Activated B cell treated with CpG ODN at 0.5 μM for 24 hours (primary cell): ENCODE measurements at regions of chr16 and their contacts with region 1.

Region 1: DNA sequence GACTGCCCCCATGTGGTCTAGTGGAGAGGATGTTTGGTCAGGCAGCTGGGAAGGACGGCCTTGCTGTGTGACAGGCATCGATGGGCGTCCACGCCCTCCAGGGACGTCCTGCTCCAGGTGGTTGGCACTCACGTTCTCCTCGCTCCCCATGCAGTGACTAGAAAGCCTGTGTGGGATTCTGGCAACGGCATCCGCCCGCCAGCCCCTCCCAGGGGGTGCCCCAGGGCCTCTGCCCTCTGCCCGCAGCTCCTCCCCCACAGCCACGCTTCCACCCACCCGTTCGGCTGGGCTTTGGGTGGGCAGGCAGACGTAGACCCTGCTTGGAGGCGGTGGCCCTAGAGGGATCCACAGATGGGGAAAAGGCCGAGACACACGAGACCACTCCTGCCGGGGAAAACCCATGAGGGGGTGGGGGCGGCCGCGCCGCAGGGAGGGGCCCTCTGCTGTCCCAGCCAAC is 4.7 kb upstream of the IL17C start:
- DNase-seq: peak; percentile 64
- ATAC-seq: peak; percentile 54
- H3K4me3 Mint-ChIP-seq: peak overlapping the region; percentile 76
- H3K27ac Mint-ChIP-seq: peak overlapping the region; percentile 71
- H3K4me1 Mint-ChIP-seq: peaks cover 46% of the 10 kb centered on the region
- H3K27me3 Mint-ChIP-seq: no peaks in the 10 kb centered on the region
- CTCF ChIP-seq: no peak

Region 2: DNA sequence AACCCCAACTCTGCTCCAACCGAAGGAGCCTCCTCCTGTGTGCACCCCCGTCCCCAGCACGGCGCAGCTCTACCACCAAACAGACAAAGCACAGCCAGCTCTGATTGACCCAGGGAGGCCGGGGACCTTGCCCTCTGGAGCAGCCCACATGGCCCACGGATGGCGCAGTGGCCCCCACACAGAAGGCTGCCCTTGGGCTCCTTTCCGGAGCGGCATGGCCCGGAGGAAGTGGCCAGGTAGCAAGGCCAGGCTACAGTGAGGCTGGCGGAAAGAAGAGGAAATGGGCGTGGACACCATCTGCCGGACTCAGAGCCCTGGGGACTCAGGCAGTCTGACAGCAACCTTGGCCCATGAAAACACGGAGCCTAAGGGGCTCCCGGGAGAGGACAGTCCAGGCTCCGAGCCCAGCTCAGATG is 83.5 kb before region 1 on chr16:
- CTCF ChIA-PET with region 1: no interaction called
- POLR2A ChIA-PET with region 1: interaction called, 10 read pairs
- intact Hi-C with region 1: no loop called
- DNase-seq: no peak
- ATAC-seq: no peak
- H3K4me3 Mint-ChIP-seq: no peak overlapping the region
- H3K27ac Mint-ChIP-seq: no peak overlapping the region
- H3K4me1 Mint-ChIP-seq: peaks cover 10% of the 10 kb centered on the region
- H3K27me3 Mint-ChIP-seq: peaks cover 7% of the 10 kb centered on the region
- CTCF ChIP-seq: no peak

Region 3: GRCh38 chr16:88662843-88663606 is 29.3 kb after region 1 on chr16 and contains the start of gene MVD:
- CTCF ChIA-PET with region 1: no interaction called
- POLR2A ChIA-PET with region 1: interaction called, 11 read pairs
- intact Hi-C with region 1: loop called (anchors 1 kb)
- DNase-seq: peak; percentile 89
- ATAC-seq: peak; percentile 94
- H3K4me3 Mint-ChIP-seq: peak within 1 kb of the TSS; percentile 94
- H3K27ac Mint-ChIP-seq: peak within 1 kb of the TSS; percentile 90
- H3K4me1 Mint-ChIP-seq: peaks cover 31% of the 10 kb centered on the region
- H3K27me3 Mint-ChIP-seq: no peaks in the 10 kb centered on the region
- CTCF ChIP-seq: no peak
- total RNA-seq, gene MVD: 115 and 140 TPM in 2 replicates

Region 4: GRCh38 chr16:88700636-88701482 is 67.1 kb after region 1 on chr16:
- CTCF ChIA-PET with region 1: interaction called, 4 read pairs
- POLR2A ChIA-PET with region 1: interaction called, 5 read pairs
- intact Hi-C with region 1: loop called (anchors 1 kb)
- DNase-seq: peak; percentile 86
- ATAC-seq: peak; percentile 81
- H3K4me3 Mint-ChIP-seq: peak overlapping the region; percentile 81
- H3K27ac Mint-ChIP-seq: peak overlapping the region; percentile 90
- H3K4me1 Mint-ChIP-seq: peaks cover 73% of the 10 kb centered on the region
- H3K27me3 Mint-ChIP-seq: no peaks in the 10 kb centered on the region
- CTCF ChIP-seq: no peak

Region 5: DNA sequence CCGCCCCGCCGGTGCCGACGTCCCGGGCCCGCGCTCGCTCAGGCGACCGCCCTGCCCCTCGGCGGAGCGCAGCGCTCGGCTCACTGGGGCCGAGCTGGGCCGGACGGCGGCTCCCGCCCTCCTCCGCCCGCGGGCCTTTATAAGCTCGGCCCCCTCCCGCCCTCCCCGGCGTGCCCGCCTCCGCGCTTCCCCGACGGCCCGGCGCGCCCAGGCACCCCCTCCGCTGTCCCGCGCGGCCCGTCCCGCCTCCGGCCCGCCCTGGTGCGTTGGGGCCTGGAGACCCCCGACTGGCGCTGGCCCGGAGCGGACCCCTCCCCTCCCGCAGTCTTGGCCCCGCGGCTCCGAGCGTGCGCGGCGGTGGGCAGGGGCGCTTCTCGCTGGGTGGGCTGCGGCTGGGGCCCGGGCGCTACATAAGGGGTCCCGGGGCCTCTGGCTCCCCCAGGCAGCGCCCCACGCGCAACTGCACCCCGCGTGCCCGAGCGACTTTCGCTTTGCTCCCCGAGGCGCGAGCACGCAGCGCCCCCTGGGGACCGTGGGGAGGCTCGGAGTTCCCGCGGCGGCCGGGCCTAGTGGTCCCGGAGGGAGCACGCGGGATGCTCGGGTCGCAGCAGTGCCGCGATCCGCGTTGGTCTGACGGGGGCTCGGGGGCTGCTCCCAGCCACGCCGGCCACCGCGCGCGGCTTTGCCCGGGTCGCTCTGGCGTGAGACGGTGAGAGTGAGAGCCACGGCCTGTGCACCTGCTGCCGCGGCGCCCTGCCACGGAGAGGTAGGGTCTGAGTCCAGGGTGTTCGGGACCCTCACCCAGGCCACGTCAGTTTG is 151.6 kb after region 1 on chr16 and contains the start of gene PIEZO1:
- CTCF ChIA-PET with region 1: no interaction called
- POLR2A ChIA-PET with region 1: interaction called, 4 read pairs
- intact Hi-C with region 1: loop called (anchors 10 kb)
- DNase-seq: peak; percentile 78
- ATAC-seq: peak; percentile 28
- H3K4me3 Mint-ChIP-seq: peak within 1 kb of the TSS; percentile 85
- H3K27ac Mint-ChIP-seq: peak within 1 kb of the TSS; percentile 76
- H3K4me1 Mint-ChIP-seq: peaks cover 47% of the 10 kb centered on the region
- H3K27me3 Mint-ChIP-seq: no peaks in the 10 kb centered on the region
- CTCF ChIP-seq: no peak
- total RNA-seq, gene PIEZO1: 75.2 and 85.9 TPM in 2 replicates